Transverse colon (tissue), 4 donors: ENCODE measurements at regions of chr3 and their contacts with region 1.

Region 1: DNA sequence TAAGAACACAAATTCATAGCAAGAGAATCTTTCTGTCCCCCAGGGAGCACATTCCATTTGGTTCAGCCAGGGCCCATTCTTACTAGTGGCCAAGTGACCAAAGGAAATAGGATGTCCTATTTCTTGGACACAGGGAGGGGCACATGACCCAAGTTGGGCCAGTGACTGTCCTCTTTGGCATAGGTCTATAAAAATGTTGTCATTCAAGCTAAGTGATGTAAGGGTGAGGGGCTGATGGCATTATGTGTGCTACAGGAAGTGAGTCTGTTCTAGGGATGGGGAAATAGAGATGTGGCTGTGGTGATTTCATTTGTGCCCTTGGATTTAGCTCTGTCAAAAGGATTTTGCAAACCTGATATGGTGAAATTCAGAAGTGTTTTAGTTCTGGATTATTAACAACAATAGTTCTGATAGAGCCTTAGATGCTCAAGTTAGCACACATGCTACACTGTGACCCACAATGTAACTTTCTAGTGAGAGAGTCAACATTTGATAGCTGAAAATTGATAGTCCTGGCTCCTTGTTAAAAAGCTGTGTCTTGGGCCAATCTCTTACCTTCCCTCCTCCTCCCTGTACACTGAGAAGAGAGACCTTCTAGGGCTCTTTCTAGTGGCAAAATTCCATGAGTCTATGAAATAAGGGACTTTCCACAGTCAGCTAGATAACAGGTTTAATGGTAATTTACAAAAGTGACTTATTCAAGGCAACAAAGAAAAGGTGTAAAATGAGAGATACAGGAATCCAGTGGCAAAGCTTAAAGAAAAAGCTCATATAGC is 117.2 kb downstream of the THRB start:
- DNase-seq: no peak
- H3K4me3 ChIP-seq: no peak overlapping the region
- H3K27ac ChIP-seq: peak overlapping the region in 2 of 4 donors; percentile 13 to 14
- H3K4me1 ChIP-seq: peaks cover 19 to 56% (median 31%) of the 10 kb centered on the region in 4 donors
- H3K27me3 ChIP-seq: no peaks in the 10 kb centered on the region
- CTCF ChIP-seq: no peak
- EP300 ChIP-seq: no peak
- POLR2A ChIP-seq: no peak

Region 2: GRCh38 chr3:23671851-23672589 is 705.4 kb before region 1 on chr3:
- in situ Hi-C with region 1: no loop called
- intact Hi-C with region 1: no loop called
- DNase-seq: peak; percentile 79
- H3K4me3 ChIP-seq: peak overlapping the region in 3 of 4 donors; percentile 3 to 43 (median 22)
- H3K27ac ChIP-seq: peak overlapping the region in 2 of 4 donors; percentile 15 to 24
- H3K4me1 ChIP-seq: peaks cover 3 to 15% (median 7%) of the 10 kb centered on the region in 4 donors
- H3K27me3 ChIP-seq: peaks cover 14% of the 10 kb centered on the region
- CTCF ChIP-seq: peak in 2 of 5 experiments; percentile 11 to 30
- EP300 ChIP-seq: no peak
- POLR2A ChIP-seq: peak; percentile 40

Region 3: GRCh38 chr3:24299806-24300626 is 77.4 kb before region 1 on chr3:
- in situ Hi-C with region 1: no loop called
- intact Hi-C with region 1: loop called (anchors 10 kb)
- DNase-seq: no peak
- H3K4me3 ChIP-seq: no peak overlapping the region
- H3K27ac ChIP-seq: peak overlapping the region in 1 of 4 donors; percentile 5
- H3K4me1 ChIP-seq: peaks cover 0 to 13% (median 8%) of the 10 kb centered on the region in 4 donors
- H3K27me3 ChIP-seq: no peaks in the 10 kb centered on the region
- CTCF ChIP-seq: no peak
- EP300 ChIP-seq: no peak
- POLR2A ChIP-seq: no peak

Region 4: GRCh38 chr3:24763415-24763814 is 386.0 kb after region 1 on chr3:
- in situ Hi-C with region 1: no loop called
- intact Hi-C with region 1: no loop called
- DNase-seq: no peak
- H3K4me3 ChIP-seq: no peak overlapping the region
- H3K27ac ChIP-seq: no peak overlapping the region
- H3K4me1 ChIP-seq: no peaks in the 10 kb centered on the region
- H3K27me3 ChIP-seq: no peaks in the 10 kb centered on the region
- CTCF ChIP-seq: no peak
- EP300 ChIP-seq: no peak
- POLR2A ChIP-seq: no peak